Activated B cell treated with CpG ODN at 0.5 μM for 24 hours (primary cell): ENCODE measurements at regions of chr4 and their contacts with region 1.

Region 1: GRCh38 chr4:37847311-37847884 is 20.9 kb downstream of the PGM2 start:
- DNase-seq: no peak
- ATAC-seq: no peak
- H3K4me3 Mint-ChIP-seq: no peak overlapping the region
- H3K27ac Mint-ChIP-seq: no peak overlapping the region
- H3K4me1 Mint-ChIP-seq: peaks cover 10% of the 10 kb centered on the region
- H3K27me3 Mint-ChIP-seq: no peaks in the 10 kb centered on the region
- CTCF ChIP-seq: no peak

Region 2: DNA sequence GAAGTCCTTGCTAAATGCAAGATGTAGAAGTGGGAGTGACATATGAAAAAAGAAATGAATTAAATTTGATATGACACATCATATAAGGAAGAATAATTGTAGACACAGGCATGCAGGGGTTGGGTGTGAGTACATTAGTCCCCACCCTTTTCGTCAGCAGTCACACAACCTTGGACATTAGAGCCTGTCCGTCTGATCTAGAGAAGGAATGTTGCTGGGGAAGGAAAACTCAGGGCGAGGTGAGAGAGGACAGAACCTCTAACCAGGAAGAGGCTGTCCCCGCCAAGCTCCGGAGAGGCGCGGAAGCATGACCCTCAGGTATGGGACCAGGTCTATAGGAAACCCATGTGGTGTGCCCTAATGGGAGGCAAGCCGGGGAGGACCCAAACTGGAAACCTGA is 263.3 kb before region 1 on chr4:
- CTCF ChIA-PET with region 1: no interaction called
- POLR2A ChIA-PET with region 1: no interaction called
- intact Hi-C with region 1: no loop called
- DNase-seq: no peak
- ATAC-seq: no peak
- H3K4me3 Mint-ChIP-seq: no peak overlapping the region
- H3K27ac Mint-ChIP-seq: no peak overlapping the region
- H3K4me1 Mint-ChIP-seq: no peaks in the 10 kb centered on the region
- H3K27me3 Mint-ChIP-seq: peaks cover 36% of the 10 kb centered on the region
- CTCF ChIP-seq: no peak

Region 3: DNA sequence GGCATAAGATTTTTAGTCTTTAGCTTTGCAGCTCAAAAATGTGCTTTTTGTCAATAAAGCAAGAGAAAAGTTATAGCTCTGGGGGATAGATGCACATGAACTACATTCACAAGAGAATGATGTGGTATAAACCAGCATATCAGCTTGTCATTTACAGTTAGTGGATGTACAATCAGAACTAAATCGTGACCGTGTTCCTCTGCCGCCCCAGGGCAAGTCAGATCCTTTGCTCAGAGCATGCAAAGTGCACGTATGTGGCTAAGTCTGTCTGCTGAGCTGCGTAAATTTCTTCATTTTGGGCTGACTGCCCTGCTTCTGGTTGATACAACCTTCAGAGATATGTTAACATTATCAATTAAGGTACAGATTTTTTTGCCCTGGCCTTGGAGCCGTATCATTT is 11.6 kb before region 1 on chr4:
- CTCF ChIA-PET with region 1: no interaction called
- POLR2A ChIA-PET with region 1: interaction called, 10 read pairs
- intact Hi-C with region 1: no loop called
- DNase-seq: no peak
- ATAC-seq: no peak
- H3K4me3 Mint-ChIP-seq: no peak overlapping the region
- H3K27ac Mint-ChIP-seq: no peak overlapping the region
- H3K4me1 Mint-ChIP-seq: peaks cover 16% of the 10 kb centered on the region
- H3K27me3 Mint-ChIP-seq: no peaks in the 10 kb centered on the region
- CTCF ChIP-seq: no peak